ENCODE measurements at regions of chr2 and their contacts with region 1.

Region 1: DNA sequence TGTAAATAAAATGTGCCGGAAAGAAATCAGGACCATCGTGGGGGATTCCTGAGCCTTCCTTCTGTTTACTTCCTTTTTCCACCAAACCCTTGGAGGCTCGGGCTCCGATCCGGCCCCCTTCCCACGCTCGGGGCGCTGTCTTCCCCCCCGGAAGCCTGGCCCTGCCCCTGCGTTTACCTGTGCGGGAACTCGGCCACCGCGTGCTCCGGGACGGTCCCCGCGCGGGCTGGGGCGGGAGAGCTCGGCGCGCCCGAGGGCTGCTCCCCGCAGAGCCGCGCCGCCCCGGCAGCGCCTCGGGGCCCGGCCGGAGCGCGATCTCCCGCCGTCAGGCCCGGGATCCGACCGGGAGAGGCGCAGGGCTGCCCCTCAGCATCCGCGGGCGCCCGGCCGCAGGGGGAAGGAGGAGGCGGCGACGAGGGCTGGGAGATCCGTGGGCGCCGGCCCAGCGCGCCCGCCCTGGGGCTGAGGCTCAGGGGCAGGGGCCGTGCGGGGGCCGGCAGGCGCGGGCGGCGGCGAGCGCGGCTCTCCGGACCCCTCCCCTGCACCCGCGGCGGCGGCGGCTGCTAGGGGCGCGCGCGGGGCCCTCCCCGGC is 435 bp downstream of the ADCY3 start:
- DNase-seq: no peak
- ATAC-seq: peak; percentile 9

Region 2: DNA sequence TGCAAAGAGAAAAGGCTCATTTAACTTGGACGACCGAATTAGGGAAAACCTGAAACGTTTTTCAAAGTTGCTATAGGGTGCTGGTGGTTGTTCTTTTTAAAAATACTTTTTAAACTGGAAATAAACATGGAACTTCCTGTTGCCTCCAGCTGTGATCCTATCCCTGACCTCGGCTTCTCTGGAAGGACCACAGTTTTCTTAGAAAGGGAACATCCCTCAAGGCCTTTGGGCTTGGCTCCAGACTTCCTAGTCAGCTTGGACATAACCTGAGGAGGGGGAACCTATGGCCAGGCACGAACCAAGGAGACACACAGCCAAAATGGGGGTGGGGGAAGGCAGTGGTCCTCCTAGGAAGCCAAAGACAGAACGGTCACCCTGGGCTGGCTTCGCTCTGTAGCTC is 68.7 kb before region 1 on chr2:
- intact Hi-C with region 1: loop called (anchors 5 kb)
- DNase-seq: no peak
- ATAC-seq: no peak

Region 3: GRCh38 chr2:24871852-24872323 is 47.7 kb before region 1 on chr2:
- intact Hi-C with region 1: loop called (anchors 5 kb)
- DNase-seq: no peak
- ATAC-seq: peak; percentile 20

Region 4: GRCh38 chr2:24935145-24935544 is 15.5 kb after region 1 on chr2:
- intact Hi-C with region 1: no loop called
- DNase-seq: no peak
- ATAC-seq: no peak

Region 5: GRCh38 chr2:24959761-24960160 is 40.2 kb after region 1 on chr2:
- intact Hi-C with region 1: no loop called
- DNase-seq: no peak
- ATAC-seq: no peak

Region 6: DNA sequence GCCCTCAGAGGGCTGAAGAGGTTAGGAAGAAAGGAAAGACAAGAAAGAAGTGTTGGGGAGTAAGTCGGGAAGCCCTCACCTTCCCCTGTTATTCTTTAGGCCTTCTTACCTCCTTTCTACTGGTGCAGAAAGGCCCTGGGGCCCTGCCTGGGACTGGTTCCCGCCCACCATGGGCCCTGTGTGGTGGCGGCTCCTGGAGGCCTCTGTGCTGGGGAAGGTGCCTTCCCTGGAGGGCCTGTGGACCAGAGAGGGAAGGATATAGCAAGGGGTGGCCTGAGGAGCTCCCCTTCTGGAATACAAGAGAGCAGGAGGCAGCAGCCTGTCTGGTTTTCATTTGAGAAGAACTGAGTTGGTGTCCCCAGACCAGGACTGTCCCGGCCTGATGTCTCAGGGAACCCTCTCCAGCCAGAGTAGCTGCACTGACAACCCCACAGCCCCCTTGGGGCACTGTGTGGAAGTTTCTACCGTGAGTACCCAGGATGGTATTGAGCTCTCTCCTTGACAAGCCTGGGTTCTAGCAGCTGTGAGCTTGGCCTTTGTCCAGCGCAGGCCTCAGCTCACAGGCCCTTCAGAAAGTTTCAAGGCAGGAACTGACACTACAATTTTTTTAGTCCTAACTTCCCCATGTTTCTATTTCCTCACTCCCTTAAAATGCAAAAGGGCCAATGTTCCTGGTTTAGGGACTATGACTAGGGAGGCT is 169.4 kb after region 1 on chr2:
- intact Hi-C with region 1: no loop called
- DNase-seq: no peak
- ATAC-seq: peak; percentile 26

Region 7: DNA sequence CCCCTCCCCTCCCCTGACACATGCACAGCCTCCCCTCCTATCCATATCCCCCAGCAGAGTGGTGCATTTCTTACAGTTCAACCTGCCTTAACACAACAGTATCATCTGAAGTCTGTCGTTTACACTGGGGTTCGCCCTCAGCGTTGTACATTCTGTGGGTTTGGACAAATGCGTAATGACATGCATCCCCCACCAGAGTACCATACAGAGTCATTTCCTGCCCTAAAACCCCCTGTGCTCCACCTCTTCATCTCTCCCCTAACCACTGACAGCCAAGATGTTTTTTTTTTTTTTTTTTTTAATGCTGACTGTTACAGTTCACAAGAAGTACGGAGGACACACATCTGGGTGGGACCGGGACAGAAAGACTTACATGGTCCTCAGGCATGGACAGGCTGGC is 226.2 kb after region 1 on chr2:
- intact Hi-C with region 1: no loop called
- DNase-seq: no peak
- ATAC-seq: no peak